ENCODE measurements at regions of chr17 and their contacts with region 1.

Region 1: GRCh38 chr17:40026816-40027613 is 11.8 kb downstream of the CSF3 start:
- DNase-seq: peak; percentile 85
- ATAC-seq: peak; percentile 95
- H3K4me3 Mint-ChIP-seq: no peak overlapping the region
- H3K27ac Mint-ChIP-seq: no peak overlapping the region
- H3K4me1 Mint-ChIP-seq: peaks cover 23% of the 10 kb centered on the region
- H3K27me3 Mint-ChIP-seq: no peaks in the 10 kb centered on the region

Region 2: GRCh38 chr17:40005520-40005919 is 21.5 kb before region 1 on chr17:
- CTCF ChIA-PET with region 1: interaction called, 19 read pairs
- DNase-seq: no peak
- ATAC-seq: no peak
- H3K4me3 Mint-ChIP-seq: no peak overlapping the region
- H3K27ac Mint-ChIP-seq: no peak overlapping the region
- H3K4me1 Mint-ChIP-seq: peaks cover 3% of the 10 kb centered on the region
- H3K27me3 Mint-ChIP-seq: no peaks in the 10 kb centered on the region

Region 3: DNA sequence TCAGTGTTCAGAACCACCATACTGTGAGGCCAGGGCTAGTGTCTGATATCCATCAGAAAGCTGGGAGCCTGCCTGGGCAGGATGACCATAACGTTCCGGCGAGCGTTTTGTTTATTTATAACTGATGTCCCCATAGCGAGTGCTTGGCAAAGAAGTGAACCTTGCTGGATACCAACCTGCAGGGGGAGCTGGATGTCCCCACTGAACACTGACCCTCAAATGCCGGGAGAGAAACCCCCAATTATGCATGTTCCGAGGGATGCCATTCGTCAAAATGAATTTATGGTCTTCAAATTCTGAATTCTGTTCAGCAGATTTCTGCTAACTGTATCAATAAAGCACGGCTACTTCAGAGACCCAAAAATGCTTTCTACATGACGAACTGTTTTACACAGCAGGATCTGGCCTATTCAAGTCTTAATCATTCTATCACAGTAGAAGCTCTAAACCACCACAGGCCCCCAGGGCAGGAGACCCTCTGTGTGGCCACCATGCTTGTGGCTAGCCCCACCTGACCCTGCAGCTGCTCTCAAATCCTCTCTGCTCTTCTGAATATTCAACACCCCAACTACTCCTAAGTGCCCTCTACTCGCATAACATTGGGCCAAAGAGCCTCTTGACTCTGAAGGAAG is 12.0 kb after region 1 on chr17:
- CTCF ChIA-PET with region 1: interaction called, 23 read pairs
- DNase-seq: no peak
- ATAC-seq: no peak
- H3K4me3 Mint-ChIP-seq: no peak overlapping the region
- H3K27ac Mint-ChIP-seq: no peak overlapping the region
- H3K4me1 Mint-ChIP-seq: no peaks in the 10 kb centered on the region
- H3K27me3 Mint-ChIP-seq: no peaks in the 10 kb centered on the region